Right cardiac atrium (tissue), 5 donors: ENCODE measurements at regions of chr13 and their contacts with region 1.

Region 1: GRCh38 chr13:113452942-113453901 is at the start of gene ADPRHL1:
- DNase-seq: peak; percentile 54 to 85 (median 78)
- ATAC-seq: peak; percentile 75 to 80
- H3K4me3 ChIP-seq: peak within 1 kb of the TSS; percentile 25
- H3K27ac ChIP-seq: peak within 1 kb of the TSS; percentile 63
- H3K4me1 ChIP-seq: no peaks in the 10 kb centered on the region
- H3K27me3 ChIP-seq: no peaks in the 10 kb centered on the region
- total RNA-seq, gene ADPRHL1: 320 to 446 (median 375) TPM

Region 2: DNA sequence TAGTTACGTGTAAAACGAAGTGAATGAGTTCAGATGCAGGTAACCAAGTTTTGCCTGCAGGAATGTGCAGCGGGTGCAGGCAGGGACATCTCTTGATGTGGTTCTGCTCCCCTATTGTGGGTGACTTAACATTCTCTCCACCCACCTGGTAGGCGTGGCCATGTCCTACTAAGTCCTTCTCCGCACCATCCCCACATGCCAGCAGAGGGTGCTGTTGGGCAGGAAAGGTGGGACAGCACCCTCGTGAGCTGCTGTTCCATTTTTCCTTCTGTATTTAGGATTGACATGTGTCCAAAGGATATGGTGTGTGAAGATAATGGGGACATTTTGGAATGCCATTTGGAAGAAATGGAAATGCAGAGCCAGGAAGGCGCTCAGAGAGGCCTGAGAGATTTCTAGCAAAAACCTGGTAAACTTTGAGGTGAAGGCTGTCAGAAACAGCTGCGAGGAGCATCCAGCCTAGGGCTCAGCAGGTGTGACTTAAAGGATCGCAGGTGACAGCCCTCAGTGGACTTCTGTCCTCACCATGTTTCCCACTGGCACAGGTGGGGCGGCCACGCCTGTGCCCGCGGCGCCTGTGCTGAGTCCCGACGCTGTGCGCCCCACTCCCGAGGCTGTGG is 510.4 kb before region 1 on chr13:
- intact Hi-C with region 1: no loop called
- DNase-seq: peak; percentile 96 to 99 (median 98)
- ATAC-seq: peak; percentile 95 to 96
- H3K4me3 ChIP-seq: peak overlapping the region; percentile 68
- H3K27ac ChIP-seq: no peak overlapping the region
- H3K4me1 ChIP-seq: no peaks in the 10 kb centered on the region
- H3K27me3 ChIP-seq: no peaks in the 10 kb centered on the region

Region 3: GRCh38 chr13:113387396-113387795 is 65.8 kb before region 1 on chr13:
- intact Hi-C with region 1: no loop called
- DNase-seq: no peak
- ATAC-seq: no peak
- H3K4me3 ChIP-seq: no peak overlapping the region
- H3K27ac ChIP-seq: no peak overlapping the region
- H3K4me1 ChIP-seq: no peaks in the 10 kb centered on the region
- H3K27me3 ChIP-seq: no peaks in the 10 kb centered on the region

Region 4: GRCh38 chr13:113400621-113401451 is 52.4 kb before region 1 on chr13:
- intact Hi-C with region 1: loop called in 1 of 4 experiments (anchors 5 kb)
- DNase-seq: peak; percentile 63 to 87 (median 84)
- ATAC-seq: peak; percentile 75 to 80
- H3K4me3 ChIP-seq: no peak overlapping the region
- H3K27ac ChIP-seq: peak overlapping the region; percentile 74
- H3K4me1 ChIP-seq: peaks cover 2% of the 10 kb centered on the region
- H3K27me3 ChIP-seq: no peaks in the 10 kb centered on the region